Endothelial cell of umbilical vein (primary cell): ENCODE measurements at regions of chr1 and their contacts with region 1.

Region 1: DNA sequence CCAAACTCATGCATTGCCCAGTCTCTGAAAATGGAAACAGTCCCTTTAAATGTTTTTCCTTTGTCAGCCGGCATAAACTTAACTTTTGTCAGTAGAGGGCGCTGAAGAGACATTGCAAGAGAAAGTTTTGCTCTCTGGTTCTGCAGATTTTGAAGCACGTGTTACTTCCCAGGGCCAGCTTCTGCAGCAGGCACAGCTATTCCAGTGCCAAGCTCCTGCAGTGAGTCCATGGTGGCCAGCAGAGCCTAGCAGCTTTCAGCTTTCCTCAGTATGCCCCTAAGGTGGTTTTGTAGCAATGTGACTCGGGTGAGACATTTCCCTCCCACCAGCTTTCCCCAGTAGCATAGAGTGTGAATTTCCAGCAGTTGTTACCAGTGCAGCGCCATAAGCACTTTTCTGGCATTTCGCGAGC is 2.6 kb upstream of the IFI44L start:
- DNase-seq: peak; percentile 77
- H3K4me3 ChIP-seq: no peak overlapping the region
- H3K27ac ChIP-seq: no peak overlapping the region
- H3K4me1 ChIP-seq: peaks cover 18% of the 10 kb centered on the region
- H3K27me3 ChIP-seq: no peaks in the 10 kb centered on the region
- CTCF ChIP-seq: peak; percentile 67 to 73
- POLR2A ChIP-seq: no peak

Region 2: GRCh38 chr1:78132174-78132947 is 485.3 kb before region 1 on chr1:
- CTCF ChIA-PET with region 1: interaction called, 14 read pairs
- POLR2A ChIA-PET with region 1: no interaction called
- dilution Hi-C with region 1: no loop called
- intact Hi-C with region 1: no loop called
- DNase-seq: no peak
- H3K4me3 ChIP-seq: no peak overlapping the region
- H3K27ac ChIP-seq: no peak overlapping the region
- H3K4me1 ChIP-seq: no peaks in the 10 kb centered on the region
- H3K27me3 ChIP-seq: no peaks in the 10 kb centered on the region
- CTCF ChIP-seq: no peak
- POLR2A ChIP-seq: no peak

Region 3: GRCh38 chr1:78649628-78650027 is 32.0 kb after region 1 on chr1 and contains the start of gene IFI44:
- CTCF ChIA-PET with region 1: interaction called, 11 read pairs
- POLR2A ChIA-PET with region 1: no interaction called
- dilution Hi-C with region 1: no loop called
- intact Hi-C with region 1: loop called (anchors 1 kb)
- DNase-seq: peak; percentile 93
- H3K4me3 ChIP-seq: peak within 1 kb of the TSS in 2 of 3 experiments; percentile 22 to 67
- H3K27ac ChIP-seq: no peak within 1 kb of the TSS
- H3K4me1 ChIP-seq: peaks cover 13% of the 10 kb centered on the region
- H3K27me3 ChIP-seq: no peaks in the 10 kb centered on the region
- CTCF ChIP-seq: no peak
- POLR2A ChIP-seq: peak; percentile 77
- total RNA-seq, gene IFI44: 9.6 and 11.8 TPM in 2 replicates

Region 4: GRCh38 chr1:78676347-78676982 is 58.8 kb after region 1 on chr1:
- CTCF ChIA-PET with region 1: interaction called, 107 read pairs
- POLR2A ChIA-PET with region 1: no interaction called
- dilution Hi-C with region 1: no loop called
- intact Hi-C with region 1: loop called (anchors 1 kb)
- DNase-seq: peak; percentile 70
- H3K4me3 ChIP-seq: no peak overlapping the region
- H3K27ac ChIP-seq: no peak overlapping the region
- H3K4me1 ChIP-seq: no peaks in the 10 kb centered on the region
- H3K27me3 ChIP-seq: peaks cover 0 to 3% of the 10 kb centered on the region in 2 experiments
- CTCF ChIP-seq: peak; percentile 55 to 58
- POLR2A ChIP-seq: no peak

Region 5: DNA sequence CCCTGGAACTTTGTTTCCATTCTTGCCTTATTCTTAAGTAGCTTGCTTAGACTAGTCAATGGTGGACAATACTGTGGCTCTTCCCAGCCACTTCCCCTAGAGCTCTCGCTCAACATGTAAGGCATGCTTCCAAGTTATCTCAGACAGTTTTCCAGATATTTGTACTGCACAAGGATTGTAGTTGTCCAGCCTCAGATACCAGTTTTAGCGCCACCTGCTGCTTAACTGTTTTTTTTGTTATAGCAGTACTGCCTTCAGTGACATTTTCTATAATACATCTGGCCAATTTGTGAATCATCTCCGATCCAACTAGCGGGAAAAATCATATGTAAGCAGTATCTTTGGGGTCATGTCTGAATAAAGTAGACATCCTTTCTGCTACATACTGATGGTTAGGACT is 735.6 kb after region 1 on chr1:
- CTCF ChIA-PET with region 1: interaction called, 10 read pairs
- POLR2A ChIA-PET with region 1: no interaction called
- dilution Hi-C with region 1: no loop called
- intact Hi-C with region 1: loop called (anchors 5 kb)
- DNase-seq: peak; percentile 67
- H3K4me3 ChIP-seq: no peak overlapping the region
- H3K27ac ChIP-seq: no peak overlapping the region
- H3K4me1 ChIP-seq: no peaks in the 10 kb centered on the region
- H3K27me3 ChIP-seq: no peaks in the 10 kb centered on the region
- CTCF ChIP-seq: peak; percentile 42 to 47
- POLR2A ChIP-seq: no peak